ENCODE measurements at regions of chr11 and their contacts with region 1.

Region 1: DNA sequence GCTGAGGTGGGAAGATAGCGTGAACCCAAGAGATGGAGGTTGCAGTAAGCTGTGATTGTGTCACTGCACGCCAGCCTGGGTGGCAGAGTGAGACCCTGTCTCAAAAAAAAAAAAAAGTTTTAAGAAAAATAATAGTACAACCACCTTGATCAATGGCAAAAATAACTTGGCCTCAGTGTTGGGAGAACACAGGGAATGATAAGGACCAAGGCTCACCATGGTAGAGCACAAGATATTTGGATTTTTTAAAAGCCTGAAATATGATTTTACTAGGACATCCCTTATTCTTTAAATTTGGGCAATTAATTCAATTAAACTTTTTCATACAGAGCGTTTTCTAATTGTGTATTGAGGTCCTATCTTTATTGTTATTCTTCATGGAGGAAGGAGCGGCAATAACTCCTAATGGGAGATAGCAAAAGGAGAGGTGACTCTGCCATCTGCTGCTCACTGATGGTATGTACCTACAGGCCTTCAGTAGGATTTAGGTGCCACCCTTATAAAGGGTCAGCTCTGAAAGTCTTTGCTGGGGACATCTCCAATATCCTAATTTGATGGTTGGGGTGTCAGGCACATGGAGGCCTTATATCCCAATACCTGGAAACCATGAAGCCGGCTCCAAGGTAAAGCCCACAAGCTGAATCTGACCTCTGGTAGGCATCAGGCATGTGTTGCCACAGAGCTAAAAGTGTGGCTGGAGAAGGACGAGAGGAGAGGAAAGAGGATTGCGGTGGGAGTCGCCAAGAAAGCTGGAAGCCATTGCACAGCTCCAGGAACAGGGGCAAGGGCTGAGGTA is 21.9 kb upstream of the POLD3 start:
- DNase-seq: peak in 1 of 2 donors; percentile 23
- H3K4me3 ChIP-seq: no peak overlapping the region
- CTCF ChIP-seq: peak in 1 of 3 donors; percentile 48
- POLR2A ChIP-seq: no peak

Region 2: GRCh38 chr11:74255741-74256369 is 314.6 kb before region 1 on chr11:
- intact Hi-C with region 1: loop called (anchors 10 kb)
- DNase-seq: peak in 1 of 2 donors; percentile 89
- H3K4me3 ChIP-seq: no peak overlapping the region
- CTCF ChIP-seq: peak in 2 of 3 donors; percentile 13 to 24
- POLR2A ChIP-seq: no peak

Region 3: GRCh38 chr11:74462009-74462408 is 108.5 kb before region 1 on chr11:
- intact Hi-C with region 1: loop called (anchors 5 kb)
- DNase-seq: peak; percentile 68 to 92
- H3K4me3 ChIP-seq: no peak overlapping the region
- CTCF ChIP-seq: no peak
- POLR2A ChIP-seq: no peak